ENCODE measurements at regions of chr1 and their contacts with region 1.

Region 1: GRCh38 chr1:53450225-53450624 is 9.0 kb upstream of the DMRTB1 start:
- DNase-seq: no peak
- ATAC-seq: no peak
- H3K4me3 ChIP-seq: no peak overlapping the region
- H3K27ac ChIP-seq: no peak overlapping the region
- H3K4me1 ChIP-seq: no peaks in the 10 kb centered on the region
- H3K27me3 ChIP-seq: peaks cover 0 to 45% (median 9%) of the 10 kb centered on the region in 9 donors
- CTCF ChIP-seq: peak in 5 of 12 donors; percentile 4 to 25 (median 20)
- POLR2A ChIP-seq: no peak

Region 2: GRCh38 chr1:52899445-52899894 is 550.8 kb before region 1 on chr1:
- intact Hi-C with region 1: loop called in 1 of 10 experiments (anchors 10 kb)
- DNase-seq: no peak
- ATAC-seq: peak in 1 of 4 donors; percentile 20
- H3K4me3 ChIP-seq: no peak overlapping the region
- H3K27ac ChIP-seq: no peak overlapping the region
- H3K4me1 ChIP-seq: peaks cover 0 to 4% (median 0%) of the 10 kb centered on the region in 12 donors
- H3K27me3 ChIP-seq: no peaks in the 10 kb centered on the region
- CTCF ChIP-seq: no peak
- POLR2A ChIP-seq: no peak